ENCODE measurements at regions of chr15 and their contacts with region 1.

Region 1: DNA sequence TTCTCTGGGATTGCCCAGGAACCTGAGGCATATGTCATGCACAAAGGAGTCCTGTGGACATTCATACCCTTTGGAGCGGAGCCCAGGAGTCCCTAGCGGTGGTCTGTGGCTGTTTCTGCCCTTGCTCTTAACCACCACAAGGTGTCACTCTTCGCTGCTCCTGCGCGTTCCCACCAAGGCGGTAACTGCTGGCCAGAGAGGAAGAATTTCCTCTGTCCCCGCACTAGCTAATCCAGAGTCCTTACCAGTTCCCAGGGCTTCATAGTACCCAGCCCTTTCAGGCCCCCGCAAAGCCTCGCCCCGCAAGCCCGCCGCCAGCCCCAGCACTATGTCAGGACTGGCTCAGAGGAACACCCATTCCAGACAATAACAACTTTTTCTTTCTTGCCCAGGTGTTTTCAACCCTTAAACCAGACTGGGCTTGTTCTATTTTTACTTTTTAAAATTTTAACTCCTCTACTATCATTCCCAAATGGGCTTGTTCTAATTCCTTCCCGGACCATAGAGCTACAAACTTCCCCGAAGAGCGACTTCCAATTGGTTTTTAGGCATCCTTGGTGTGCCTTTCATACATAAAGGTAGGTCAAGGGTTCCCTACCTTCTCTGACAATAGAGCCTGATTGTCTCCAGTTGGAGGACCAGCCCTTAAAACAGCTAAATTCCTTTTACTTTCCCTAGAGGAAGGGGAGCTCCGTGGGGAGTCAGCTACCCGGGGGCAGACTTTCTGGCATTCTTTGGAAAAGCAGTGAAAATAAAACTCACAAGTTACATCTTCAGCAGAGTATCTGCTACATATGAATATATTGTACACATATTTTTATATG is 31.8 kb upstream of the ZNF774 start:
- DNase-seq: no peak
- H3K4me3 ChIP-seq: peak overlapping the region in 3 of 4 donors; percentile 25 to 53 (median 32)
- H3K27ac ChIP-seq: peak overlapping the region; percentile 69 to 77 (median 73)
- H3K4me1 ChIP-seq: peaks cover 10 to 47% (median 33%) of the 10 kb centered on the region in 3 donors
- H3K27me3 ChIP-seq: no peaks in the 10 kb centered on the region
- CTCF ChIP-seq: peak; percentile 93 to 99 (median 96)
- POLR2A ChIP-seq: peak in 1 of 4 donors; percentile 9

Region 2: DNA sequence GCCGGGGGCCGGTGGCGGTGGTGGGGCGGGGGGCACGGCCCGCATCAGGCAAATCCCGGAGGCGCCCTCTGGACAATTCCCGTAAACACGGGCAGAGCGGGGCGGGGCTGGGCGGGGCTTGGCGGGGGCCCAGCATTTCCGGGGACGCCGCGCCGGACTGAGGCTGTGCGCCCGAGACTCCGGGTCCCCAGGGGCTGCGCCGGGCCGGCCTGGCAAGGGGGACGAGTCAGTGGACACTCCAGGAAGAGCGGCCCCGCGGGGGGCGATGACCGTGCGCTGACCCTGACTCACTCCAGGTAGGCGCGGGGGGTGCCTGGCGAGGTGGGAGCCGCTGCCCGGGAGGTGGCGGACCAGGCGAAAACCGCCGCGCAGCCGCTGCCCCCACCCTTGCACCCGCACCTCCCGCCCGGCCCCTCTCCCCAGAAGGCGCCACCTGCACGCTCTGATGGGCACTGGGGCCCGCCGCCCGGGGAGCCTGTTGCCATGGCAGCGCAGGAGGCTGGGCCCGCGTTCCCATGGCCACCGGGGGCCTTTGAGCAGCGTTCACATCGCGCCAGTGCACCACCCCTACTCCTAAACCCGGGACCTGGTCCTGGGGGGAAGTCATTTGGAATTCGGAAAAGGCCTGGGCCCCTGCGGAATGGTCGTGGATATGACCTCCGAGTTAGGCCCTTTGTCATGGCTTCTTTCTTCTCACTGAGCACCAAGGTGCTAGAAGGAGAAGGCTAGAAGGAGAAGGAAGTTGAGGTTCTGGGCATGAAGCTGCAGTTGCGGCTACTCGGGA is 135.3 kb before region 1 on chr15:
- intact Hi-C with region 1: no loop called
- DNase-seq: peak; percentile 34
- H3K4me3 ChIP-seq: peak overlapping the region; percentile 66 to 96 (median 78)
- H3K27ac ChIP-seq: peak overlapping the region; percentile 96 to 99 (median 98)
- H3K4me1 ChIP-seq: peaks cover 19 to 82% (median 51%) of the 10 kb centered on the region in 3 donors
- H3K27me3 ChIP-seq: peaks cover 0 to 6% (median 0%) of the 10 kb centered on the region in 4 donors
- CTCF ChIP-seq: no peak
- POLR2A ChIP-seq: peak in 1 of 4 donors; percentile 72

Region 3: GRCh38 chr15:90482124-90483011 is 162.1 kb after region 1 on chr15:
- intact Hi-C with region 1: loop called (anchors 10 kb)
- DNase-seq: no peak
- H3K4me3 ChIP-seq: no peak overlapping the region
- H3K27ac ChIP-seq: no peak overlapping the region
- H3K4me1 ChIP-seq: no peaks in the 10 kb centered on the region
- H3K27me3 ChIP-seq: no peaks in the 10 kb centered on the region
- CTCF ChIP-seq: peak; percentile 51 to 71 (median 68)
- POLR2A ChIP-seq: no peak

Measured in esophagus squamous epithelium (tissue), 5 donors.